Naive thymus-derived CD8-positive, alpha-beta T cell (primary cell): ENCODE measurements at regions of chr17 and their contacts with region 1.

Region 1: GRCh38 chr17:50883850-50884438 is 17.8 kb upstream of the TOB1 start:
- DNase-seq: no peak
- ATAC-seq: peak in 1 of 2 donors; percentile 25
- H3K4me3 Mint-ChIP-seq: peak overlapping the region in 1 of 10 donors; percentile 31
- H3K27ac Mint-ChIP-seq: peak overlapping the region in 9 of 10 donors; percentile 19 to 92 (median 76)
- H3K4me1 Mint-ChIP-seq: peaks cover 21 to 46% (median 35%) of the 10 kb centered on the region in 4 donors
- H3K27me3 Mint-ChIP-seq: no peaks in the 10 kb centered on the region

Region 2: GRCh38 chr17:50944054-50944901 is 60.3 kb after region 1 on chr17:
- POLR2A ChIA-PET with region 1: interaction called, 11 read pairs
- DNase-seq: peak; percentile 54 to 89 (median 74)
- ATAC-seq: peak; percentile 87
- H3K4me3 Mint-ChIP-seq: peak overlapping the region; percentile 77 to 89 (median 84)
- H3K27ac Mint-ChIP-seq: peak overlapping the region; percentile 91 to 96 (median 94)
- H3K4me1 Mint-ChIP-seq: peaks cover 31 to 62% (median 52%) of the 10 kb centered on the region in 4 donors
- H3K27me3 Mint-ChIP-seq: no peaks in the 10 kb centered on the region